ENCODE measurements at regions of chr17 and their contacts with region 1.

Region 1: GRCh38 chr17:17440010-17440843 is 36.6 kb upstream of the MED9 start:
- DNase-seq: peak; percentile 65 to 71 (median 70)
- H3K4me3 ChIP-seq: no peak overlapping the region
- H3K4me3 Mint-ChIP-seq: no peak overlapping the region
- H3K27ac ChIP-seq: no peak overlapping the region
- H3K27ac Mint-ChIP-seq: peak overlapping the region in 2 of 7 donors; percentile 19 to 53
- H3K4me1 ChIP-seq: peaks cover 7% of the 10 kb centered on the region
- H3K4me1 Mint-ChIP-seq: peaks cover 0 to 5% (median 2%) of the 10 kb centered on the region in 4 donors
- H3K27me3 ChIP-seq: no peaks in the 10 kb centered on the region
- H3K27me3 Mint-ChIP-seq: peaks cover 0 to 4% of the 10 kb centered on the region in 2 donors

Region 2: GRCh38 chr17:17391668-17392370 is 48.4 kb before region 1 on chr17:
- CTCF ChIA-PET with region 1: interaction called, 5 read pairs
- POLR2A ChIA-PET with region 1: no interaction called
- intact Hi-C with region 1: loop called (anchors 2 kb)
- DNase-seq: peak; percentile 76 to 81 (median 79)
- H3K4me3 ChIP-seq: peak overlapping the region; percentile 49 to 53
- H3K4me3 Mint-ChIP-seq: peak overlapping the region; percentile 85 to 94 (median 90)
- H3K27ac ChIP-seq: peak overlapping the region; percentile 28
- H3K27ac Mint-ChIP-seq: peak overlapping the region; percentile 77 to 96 (median 87)
- H3K4me1 ChIP-seq: peaks cover 21% of the 10 kb centered on the region
- H3K4me1 Mint-ChIP-seq: peaks cover 12 to 25% (median 18%) of the 10 kb centered on the region in 4 donors
- H3K27me3 ChIP-seq: no peaks in the 10 kb centered on the region
- H3K27me3 Mint-ChIP-seq: peaks cover 2% of the 10 kb centered on the region in 2 donors

Region 3: GRCh38 chr17:17403899-17404576 is 36.2 kb before region 1 on chr17:
- CTCF ChIA-PET with region 1: interaction called, 3 read pairs
- POLR2A ChIA-PET with region 1: no interaction called
- intact Hi-C with region 1: loop called (anchors 1 kb)
- DNase-seq: peak; percentile 50 to 60 (median 51)
- H3K4me3 ChIP-seq: peak overlapping the region; percentile 17 to 44
- H3K4me3 Mint-ChIP-seq: peak overlapping the region; percentile 54 to 85 (median 80)
- H3K27ac ChIP-seq: peak overlapping the region; percentile 14
- H3K27ac Mint-ChIP-seq: peak overlapping the region; percentile 82 to 97 (median 91)
- H3K4me1 ChIP-seq: peaks cover 43% of the 10 kb centered on the region
- H3K4me1 Mint-ChIP-seq: peaks cover 40 to 84% (median 59%) of the 10 kb centered on the region in 4 donors
- H3K27me3 ChIP-seq: no peaks in the 10 kb centered on the region
- H3K27me3 Mint-ChIP-seq: no peaks in the 10 kb centered on the region

Region 4: DNA sequence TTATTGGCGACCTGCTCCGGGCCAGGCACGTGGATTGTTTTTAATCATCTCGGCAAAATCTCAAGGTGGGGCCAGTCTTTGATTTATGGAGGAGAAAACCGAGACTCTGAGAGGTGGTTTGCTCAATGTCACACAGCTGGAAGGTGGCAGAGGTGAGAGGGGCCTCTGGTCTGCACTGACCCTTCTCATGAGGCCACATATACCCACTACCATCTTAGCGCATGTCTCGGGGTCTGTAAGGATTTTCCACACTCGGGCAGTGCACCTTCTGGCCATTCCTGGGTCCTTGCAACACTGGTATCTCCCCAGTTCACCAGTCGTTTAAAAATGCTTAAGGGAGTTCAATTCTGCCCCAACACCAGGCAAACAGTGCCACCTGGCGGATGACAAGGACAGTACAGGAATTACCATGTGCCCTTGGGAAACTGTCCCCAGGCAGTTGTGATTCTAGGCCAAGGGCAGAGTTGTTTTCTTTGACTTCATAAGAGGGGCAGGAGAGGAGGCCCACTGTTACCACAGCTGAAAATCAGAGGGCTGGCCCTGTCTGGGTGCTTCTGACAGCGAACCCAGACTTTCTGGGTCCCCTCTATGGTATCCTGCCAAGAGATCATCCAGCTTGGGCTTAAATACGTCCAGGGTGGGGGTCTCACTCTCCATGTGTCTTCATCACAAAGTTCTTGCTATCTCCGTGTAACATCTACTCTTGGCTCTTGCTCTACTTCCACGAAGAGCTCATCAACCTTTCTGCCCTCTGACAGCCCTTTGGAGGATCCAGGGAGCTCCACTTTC is 201.6 kb after region 1 on chr17:
- CTCF ChIA-PET with region 1: interaction called, 5 read pairs
- POLR2A ChIA-PET with region 1: no interaction called
- intact Hi-C with region 1: loop called (anchors 1 kb)
- DNase-seq: peak; percentile 67 to 74 (median 72)
- H3K4me3 ChIP-seq: no peak overlapping the region
- H3K4me3 Mint-ChIP-seq: no peak overlapping the region
- H3K27ac ChIP-seq: no peak overlapping the region
- H3K27ac Mint-ChIP-seq: peak overlapping the region in 1 of 7 donors; percentile 27
- H3K4me1 ChIP-seq: no peaks in the 10 kb centered on the region
- H3K4me1 Mint-ChIP-seq: no peaks in the 10 kb centered on the region
- H3K27me3 ChIP-seq: no peaks in the 10 kb centered on the region
- H3K27me3 Mint-ChIP-seq: peaks cover 6% of the 10 kb centered on the region in 2 donors

Measured in CD4-positive, alpha-beta memory T cell (primary cell).